GM12878 (cell line): ENCODE measurements at regions of chr20 and their contacts with region 1.

Region 1: DNA sequence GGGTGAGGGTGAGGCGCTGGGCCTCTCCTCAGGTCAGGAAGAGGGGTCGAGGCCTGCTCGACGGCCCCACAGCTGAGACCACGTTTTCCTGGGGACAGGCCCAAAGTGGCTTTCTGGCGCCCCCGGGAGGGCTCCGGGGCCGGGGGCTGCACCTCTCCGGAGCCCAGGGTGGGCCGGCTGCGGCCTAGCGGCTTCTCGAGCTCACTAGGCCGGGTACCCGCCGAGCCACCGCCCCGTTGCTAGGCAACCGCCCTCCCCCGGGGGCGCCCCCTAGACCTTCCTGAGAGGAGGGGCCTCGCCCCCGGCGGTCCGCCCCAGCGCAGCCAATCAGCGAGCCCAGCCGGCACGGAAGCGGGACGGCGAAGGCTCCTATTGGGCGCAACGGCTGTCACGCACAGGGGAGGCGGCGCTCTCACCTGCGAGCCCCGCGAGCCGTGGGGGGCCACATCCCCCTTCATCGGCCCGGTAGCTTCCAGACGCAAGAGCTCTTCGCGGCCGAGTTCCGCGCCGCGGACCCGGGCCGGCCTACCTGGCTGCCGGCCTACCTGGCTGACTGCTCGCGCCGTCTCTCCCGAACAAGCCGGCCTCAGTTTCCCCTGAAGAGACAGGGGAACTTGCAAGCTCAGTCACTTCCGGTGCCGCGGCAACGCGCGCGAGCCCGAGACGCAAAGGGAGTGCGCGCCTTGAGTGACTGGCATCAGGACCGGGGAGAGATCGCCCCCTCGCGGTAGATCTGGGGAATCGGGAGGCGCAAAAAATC is 831 bp upstream of the BCL2L1 start:
- DNase-seq: peak; percentile 83
- ATAC-seq: peak; percentile 92
- H3K4me3 ChIP-seq: peak overlapping the region; percentile 77
- H3K27ac ChIP-seq: peak overlapping the region; percentile 93
- H3K4me1 ChIP-seq: peaks cover 15% of the 10 kb centered on the region
- H3K27me3 ChIP-seq: no peaks in the 10 kb centered on the region
- CTCF ChIP-seq: peak; percentile 91 to 99 (median 97)
- EP300 ChIP-seq: no peak
- POLR2A ChIP-seq: peak; percentile 73
- RAD21 ChIP-seq: peak; percentile 93

Region 2: DNA sequence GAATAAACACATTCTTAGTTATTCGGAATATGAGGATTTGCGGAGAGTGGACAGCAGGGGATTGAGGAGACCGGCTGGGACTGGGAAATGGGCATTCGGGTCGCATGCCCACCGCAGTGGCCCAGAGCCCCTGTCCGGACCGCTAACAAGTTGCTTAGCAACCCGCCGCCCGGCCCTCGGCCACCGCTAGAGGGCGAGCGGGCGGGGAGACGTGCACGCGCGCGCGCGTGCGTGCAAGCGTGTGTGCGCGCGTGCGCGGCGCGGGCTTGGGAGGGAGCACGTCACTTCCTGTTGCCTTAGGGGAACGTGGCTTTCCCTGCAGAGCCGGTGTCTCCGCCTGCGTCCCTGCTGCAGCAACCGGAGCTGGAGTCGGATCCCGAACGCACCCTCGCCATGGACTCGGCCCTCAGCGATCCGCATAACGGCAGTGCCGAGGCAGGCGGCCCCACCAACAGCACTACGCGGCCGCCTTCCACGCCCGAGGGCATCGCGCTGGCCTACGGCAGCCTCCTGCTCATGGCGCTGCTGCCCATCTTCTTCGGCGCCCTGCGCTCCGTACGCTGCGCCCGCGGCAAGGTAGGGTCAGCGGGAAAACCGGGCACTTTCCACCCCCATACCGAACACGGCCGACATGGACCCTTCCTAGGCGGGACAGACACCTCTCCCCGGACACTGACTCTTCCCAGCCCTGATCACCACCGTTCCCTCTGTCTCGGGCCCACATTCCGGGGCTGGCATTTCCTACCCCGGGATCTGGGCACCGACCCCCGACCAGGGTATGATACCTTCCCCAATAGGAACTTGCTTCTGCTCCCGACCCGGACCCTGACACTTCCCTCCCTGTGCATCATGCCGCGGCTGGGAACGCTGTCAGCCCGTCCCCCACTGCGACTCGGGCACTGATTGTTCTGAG is 209.1 kb before region 1 on chr20 and contains the start of gene HM13:
- CTCF ChIA-PET with region 1: no interaction called
- POLR2A ChIA-PET with region 1: no interaction called
- RAD21 ChIA-PET with region 1: no interaction called
- SMC1A ChIA-PET with region 1: no interaction called
- in situ Hi-C with region 1: no loop called
- intact Hi-C with region 1: loop called (anchors 5 kb)
- DNase-seq: peak; percentile 63
- ATAC-seq: peak; percentile 83
- H3K4me3 ChIP-seq: peak within 1 kb of the TSS; percentile 90
- H3K27ac ChIP-seq: peak within 1 kb of the TSS; percentile 85
- H3K4me1 ChIP-seq: peaks cover 10% of the 10 kb centered on the region
- H3K27me3 ChIP-seq: no peaks in the 10 kb centered on the region
- CTCF ChIP-seq: peak; percentile 90 to 99 (median 99); a peak in 5 of 6 replicates
- EP300 ChIP-seq: no peak
- POLR2A ChIP-seq: peak; percentile 100
- RAD21 ChIP-seq: no peak
- polyA plus RNA-seq, gene HM13: 4.8 to 17.5 TPM

Region 3: GRCh38 chr20:31572701-31573554 is 150.6 kb before region 1 on chr20:
- CTCF ChIA-PET with region 1: interaction called, 16 read pairs
- POLR2A ChIA-PET with region 1: no interaction called
- RAD21 ChIA-PET with region 1: interaction called, 11 read pairs
- SMC1A ChIA-PET with region 1: no interaction called
- in situ Hi-C with region 1: no loop called
- intact Hi-C with region 1: no loop called
- DNase-seq: peak; percentile 41
- ATAC-seq: peak; percentile 94
- H3K4me3 ChIP-seq: peak overlapping the region; percentile 81
- H3K27ac ChIP-seq: peak overlapping the region; percentile 88
- H3K4me1 ChIP-seq: peaks cover 12% of the 10 kb centered on the region
- H3K27me3 ChIP-seq: no peaks in the 10 kb centered on the region; a peak in 1 of 4 replicates
- CTCF ChIP-seq: no peak
- EP300 ChIP-seq: no peak
- POLR2A ChIP-seq: peak; percentile 72
- RAD21 ChIP-seq: no peak

Region 4: DNA sequence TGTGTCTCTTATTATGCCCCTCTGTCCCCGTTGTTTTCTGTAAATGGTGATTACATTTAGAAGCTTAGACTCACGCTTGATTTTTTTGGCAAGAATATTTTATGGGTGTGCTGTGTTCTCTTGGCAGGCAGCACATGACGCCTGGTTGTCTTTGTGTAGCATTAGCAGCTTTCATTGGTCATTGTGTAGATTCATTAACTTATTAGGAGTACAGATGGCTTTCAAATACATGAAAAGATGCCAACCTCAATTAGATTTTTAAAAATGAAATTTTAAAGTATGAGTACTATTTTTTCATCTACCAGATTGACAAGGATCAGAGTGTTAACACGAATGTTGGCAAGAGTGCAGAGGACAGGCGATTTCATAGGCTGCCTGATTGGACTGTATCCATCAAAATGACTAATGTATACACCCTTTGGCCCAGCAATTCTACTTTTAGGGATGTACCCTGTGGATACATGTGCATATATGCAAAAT is 70.5 kb before region 1 on chr20:
- CTCF ChIA-PET with region 1: interaction called, 10 read pairs
- POLR2A ChIA-PET with region 1: no interaction called
- RAD21 ChIA-PET with region 1: interaction called, 428 read pairs
- SMC1A ChIA-PET with region 1: interaction called, 321 read pairs
- in situ Hi-C with region 1: no loop called
- intact Hi-C with region 1: no loop called
- DNase-seq: no peak
- ATAC-seq: no peak
- H3K4me3 ChIP-seq: no peak overlapping the region
- H3K27ac ChIP-seq: no peak overlapping the region
- H3K4me1 ChIP-seq: no peaks in the 10 kb centered on the region
- H3K27me3 ChIP-seq: no peaks in the 10 kb centered on the region
- CTCF ChIP-seq: no peak
- EP300 ChIP-seq: no peak
- POLR2A ChIP-seq: no peak
- RAD21 ChIP-seq: no peak

Region 5: DNA sequence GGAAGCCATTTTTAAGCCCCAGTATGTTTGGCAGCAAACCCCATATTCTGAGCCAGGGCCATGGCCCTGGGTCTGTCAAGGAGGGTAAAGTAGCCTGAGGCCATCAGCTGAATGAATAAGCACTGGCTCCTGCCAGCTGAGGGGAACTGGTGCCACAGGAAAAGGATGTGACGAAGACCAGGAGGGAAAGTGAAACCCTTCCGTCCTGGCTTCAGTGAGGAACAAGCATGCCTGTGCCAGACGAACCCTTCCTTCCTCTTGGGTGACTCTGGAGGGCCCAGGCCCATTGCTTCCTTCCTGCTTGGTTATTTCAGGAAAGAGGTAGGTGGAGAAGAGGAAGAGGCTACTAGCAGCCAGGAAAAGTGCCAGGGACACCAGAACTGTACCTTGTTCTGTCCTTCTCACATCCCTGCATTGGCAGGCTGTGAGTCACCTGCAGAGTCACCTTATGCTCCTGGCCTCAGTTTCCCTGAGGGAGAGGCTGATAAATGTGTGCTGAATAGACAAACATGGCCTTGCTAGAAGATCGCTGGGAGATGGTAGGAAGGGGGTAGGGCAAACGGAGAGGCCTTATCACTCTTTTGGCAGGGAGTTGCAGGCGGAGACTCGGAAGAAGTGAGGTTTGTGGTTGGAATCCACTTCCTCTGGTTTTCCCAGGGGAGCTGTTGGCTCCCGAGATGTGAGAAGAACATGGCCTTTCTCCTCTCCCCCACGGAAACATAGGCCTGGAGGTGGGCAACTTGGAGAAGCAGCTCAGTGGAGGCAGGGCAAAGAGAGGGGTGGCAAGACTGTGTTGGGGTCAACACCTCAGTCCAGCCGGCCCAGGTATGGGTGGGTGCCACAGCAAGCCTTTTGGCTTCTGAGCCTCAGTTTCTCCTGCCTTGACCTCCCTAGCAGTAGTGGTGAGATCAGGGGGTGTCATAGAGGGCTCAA is 48.3 kb before region 1 on chr20:
- CTCF ChIA-PET with region 1: interaction called, 141 read pairs
- POLR2A ChIA-PET with region 1: interaction called, 33 read pairs
- RAD21 ChIA-PET with region 1: interaction called, 45 read pairs
- SMC1A ChIA-PET with region 1: interaction called, 51 read pairs
- in situ Hi-C with region 1: no loop called
- intact Hi-C with region 1: loop called (anchors 2 kb)
- DNase-seq: no peak
- ATAC-seq: peak; percentile 89
- H3K4me3 ChIP-seq: peak overlapping the region; percentile 68
- H3K27ac ChIP-seq: peak overlapping the region; percentile 91
- H3K4me1 ChIP-seq: peaks cover 30% of the 10 kb centered on the region
- H3K27me3 ChIP-seq: no peaks in the 10 kb centered on the region
- CTCF ChIP-seq: no peak
- EP300 ChIP-seq: no peak
- POLR2A ChIP-seq: peak; percentile 63
- RAD21 ChIP-seq: no peak

Region 6: DNA sequence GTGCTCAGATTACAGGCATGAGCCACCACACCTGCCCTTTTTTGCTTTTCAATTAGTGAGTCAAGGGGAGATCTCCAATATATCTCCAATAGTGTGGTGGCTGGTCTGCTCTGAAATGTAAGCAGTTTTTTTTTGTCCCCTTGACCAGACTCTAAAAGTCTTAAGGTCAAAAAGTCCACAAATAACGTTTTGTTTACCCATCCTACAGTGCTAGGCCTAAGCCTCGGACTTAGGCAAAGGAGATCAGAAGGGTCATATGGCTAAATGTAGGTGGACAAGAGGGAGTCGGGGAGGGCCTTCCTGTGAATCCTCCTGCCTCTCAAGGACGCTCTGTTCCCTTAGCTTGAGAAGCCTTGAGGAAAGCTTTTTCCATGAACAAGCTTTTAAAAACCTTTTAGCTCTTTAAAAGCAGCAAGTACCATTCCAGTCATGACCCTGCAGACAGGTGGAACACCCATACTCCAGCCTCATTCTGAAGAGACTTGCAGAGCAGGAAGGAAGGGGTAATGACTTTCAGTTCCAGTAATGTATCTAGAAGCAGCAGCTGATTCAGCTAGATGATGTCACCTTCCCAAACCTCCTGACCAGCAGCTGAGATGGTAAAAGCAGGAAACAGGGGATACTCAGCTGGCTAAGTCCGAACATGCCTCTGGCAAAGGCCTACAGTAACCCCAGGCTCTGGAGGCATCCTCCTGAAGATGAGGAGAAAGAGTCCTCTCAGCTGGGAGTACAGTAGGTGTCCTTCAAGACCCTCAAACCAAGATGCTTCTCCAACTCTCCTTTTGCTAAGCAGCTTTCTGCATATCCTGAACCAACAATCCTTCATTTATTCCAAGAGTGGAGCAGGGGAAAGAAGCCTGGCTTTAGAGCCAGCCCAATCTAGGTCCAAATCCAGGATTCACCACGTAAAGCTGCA is 24.4 kb before region 1 on chr20:
- CTCF ChIA-PET with region 1: interaction called, 254 read pairs
- POLR2A ChIA-PET with region 1: interaction called, 34 read pairs
- RAD21 ChIA-PET with region 1: interaction called, 52 read pairs
- SMC1A ChIA-PET with region 1: interaction called, 56 read pairs
- in situ Hi-C with region 1: no loop called
- intact Hi-C with region 1: no loop called
- DNase-seq: no peak
- ATAC-seq: peak; percentile 96
- H3K4me3 ChIP-seq: peak overlapping the region; percentile 30; the same call in 1 of the 2 replicates
- H3K27ac ChIP-seq: peak overlapping the region; percentile 60
- H3K4me1 ChIP-seq: peaks cover 21% of the 10 kb centered on the region
- H3K27me3 ChIP-seq: no peaks in the 10 kb centered on the region
- CTCF ChIP-seq: no peak
- EP300 ChIP-seq: no peak
- POLR2A ChIP-seq: no peak
- RAD21 ChIP-seq: no peak

Region 7: GRCh38 chr20:31738729-31739561 is 15.4 kb after region 1 on chr20 and contains the start of gene TPX2:
- CTCF ChIA-PET with region 1: interaction called, 28 read pairs
- POLR2A ChIA-PET with region 1: interaction called, 8 read pairs
- RAD21 ChIA-PET with region 1: interaction called, 22 read pairs
- SMC1A ChIA-PET with region 1: interaction called, 8 read pairs
- in situ Hi-C with region 1: no loop called
- intact Hi-C with region 1: no loop called
- DNase-seq: peak; percentile 88
- ATAC-seq: peak; percentile 98
- H3K4me3 ChIP-seq: peak within 1 kb of the TSS; percentile 89
- H3K27ac ChIP-seq: peak within 1 kb of the TSS; percentile 77
- H3K4me1 ChIP-seq: no peaks in the 10 kb centered on the region
- H3K27me3 ChIP-seq: no peaks in the 10 kb centered on the region
- CTCF ChIP-seq: peak in 1 of 3 experiments; percentile 30; a peak in 2 of 6 replicates
- EP300 ChIP-seq: no peak
- POLR2A ChIP-seq: peak; percentile 82
- RAD21 ChIP-seq: no peak
- polyA plus RNA-seq, gene TPX2: 29.7 to 40.7 TPM